Heart right ventricle (tissue), 16 donors: ENCODE measurements at regions of chr20 and their contacts with region 1.

Region 1: GRCh38 chr20:44966030-44966961 is at the start of gene STK4:
- DNase-seq: peak; percentile 93 to 95
- ATAC-seq: peak; percentile 98 to 99 (median 98)
- H3K4me3 ChIP-seq: peak within 1 kb of the TSS; percentile 63 to 92 (median 86)
- H3K27ac ChIP-seq: peak within 1 kb of the TSS; percentile 58 to 97 (median 84)
- H3K4me1 ChIP-seq: peaks cover 5 to 50% (median 17%) of the 10 kb centered on the region in 9 donors
- H3K27me3 ChIP-seq: no peaks in the 10 kb centered on the region
- CTCF ChIP-seq: peak in 8 of 9 donors; percentile 32 to 70 (median 56)
- total RNA-seq, gene STK4: 7.7 to 18.1 (median 8.2) TPM

Region 2: DNA sequence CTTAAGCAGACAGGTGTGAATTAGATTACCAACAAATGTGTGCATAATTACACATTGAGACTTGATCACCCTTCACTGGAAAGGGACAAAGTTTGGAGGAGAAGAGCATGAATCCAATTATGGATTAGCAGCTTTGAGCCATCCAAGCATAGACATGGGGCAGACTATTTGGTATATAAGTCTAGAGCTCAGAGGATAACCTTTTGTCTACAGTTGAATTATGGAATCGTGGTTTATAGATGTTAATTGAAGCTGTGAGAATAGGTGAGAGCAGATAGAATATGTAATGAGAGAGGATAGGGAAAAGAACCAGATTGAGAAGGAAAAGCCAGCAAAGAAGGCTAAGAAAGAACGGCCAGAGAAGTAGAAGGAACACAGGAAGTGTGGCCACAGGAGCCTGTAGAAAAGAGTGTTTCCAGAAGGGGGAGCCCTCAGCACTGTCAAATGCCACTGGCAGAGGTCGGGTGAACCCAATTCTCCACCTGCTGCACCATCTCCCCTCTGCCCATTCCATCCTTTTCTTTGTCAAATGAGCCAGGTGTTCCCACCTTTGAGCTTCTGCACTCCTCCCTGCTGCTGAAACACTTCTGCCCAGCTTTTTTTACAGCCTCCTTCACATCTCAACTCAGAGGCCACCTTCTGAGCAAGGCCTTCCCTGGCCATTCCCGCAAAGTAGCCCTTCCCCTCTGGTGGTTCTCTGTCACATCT is 832.8 kb after region 1 on chr20:
- intact Hi-C with region 1: loop called in 1 of 10 experiments (anchors 10 kb)
- DNase-seq: peak in 1 of 2 donors; percentile 61
- ATAC-seq: peak; percentile 55 to 86 (median 70)
- H3K4me3 ChIP-seq: no peak overlapping the region
- H3K27ac ChIP-seq: peak overlapping the region in 1 of 10 donors; percentile 6
- H3K4me1 ChIP-seq: peaks cover 0 to 27% (median 4%) of the 10 kb centered on the region in 9 donors
- H3K27me3 ChIP-seq: no peaks in the 10 kb centered on the region
- CTCF ChIP-seq: peak; percentile 48 to 82 (median 71)